Activated T-helper 1 cell treated with anti-CD3 and anti-CD28 coated beads, Interleukin-12 subunit alpha, Interleukin-12 subunit beta, Interleukin-2, Interleukin-4 antibody, amounts not matched to agents 30 ng/mL and 10 ng/mL and 1 ng/mL, durations not matched to agents 14 hours and 24 hours and 36 hours (primary cell): ENCODE measurements at regions of chr13 and their contacts with region 1.

Region 1: GRCh38 chr13:32538621-32539246 is at the start of gene N4BP2L2:
- DNase-seq: peak; percentile 88
- H3K4me3 Mint-ChIP-seq: peak within 1 kb of the TSS; percentile 96
- H3K27ac Mint-ChIP-seq: peak within 1 kb of the TSS; percentile 99
- H3K4me1 Mint-ChIP-seq: peaks cover 46% of the 10 kb centered on the region
- H3K27me3 Mint-ChIP-seq: peaks cover 8% of the 10 kb centered on the region
- total RNA-seq, gene N4BP2L2: 87.1 and 92.8 TPM in 2 replicates

Region 2: GRCh38 chr13:32472194-32472621 is 66.5 kb before region 1 on chr13:
- intact Hi-C with region 1: loop called (anchors 2 kb)
- DNase-seq: no peak
- H3K4me3 Mint-ChIP-seq: no peak overlapping the region
- H3K27ac Mint-ChIP-seq: peak overlapping the region; percentile 82
- H3K4me1 Mint-ChIP-seq: peaks cover 20% of the 10 kb centered on the region
- H3K27me3 Mint-ChIP-seq: no peaks in the 10 kb centered on the region

Region 3: DNA sequence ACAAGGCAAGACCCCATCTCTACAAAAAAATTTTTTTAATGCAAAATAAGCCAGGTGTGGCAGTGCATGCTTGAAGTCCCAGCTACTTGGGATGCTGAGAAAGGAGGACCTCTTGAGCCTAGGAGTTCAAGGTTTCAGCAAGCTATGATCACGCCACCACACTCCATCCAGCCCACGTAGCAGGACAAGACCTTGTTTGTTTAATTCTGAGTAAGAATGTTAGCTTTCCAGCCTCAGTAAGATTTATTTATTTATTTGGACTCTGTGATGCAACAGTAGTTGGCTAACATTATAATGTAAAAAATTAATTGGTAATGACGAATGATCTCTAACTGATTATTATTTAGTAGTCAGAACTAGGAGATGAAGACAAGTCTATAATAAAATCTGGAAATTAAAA is 23.5 kb before region 1 on chr13:
- intact Hi-C with region 1: loop called (anchors 1 kb)
- DNase-seq: no peak
- H3K4me3 Mint-ChIP-seq: no peak overlapping the region
- H3K27ac Mint-ChIP-seq: no peak overlapping the region
- H3K4me1 Mint-ChIP-seq: peaks cover 10% of the 10 kb centered on the region
- H3K27me3 Mint-ChIP-seq: no peaks in the 10 kb centered on the region

Region 4: DNA sequence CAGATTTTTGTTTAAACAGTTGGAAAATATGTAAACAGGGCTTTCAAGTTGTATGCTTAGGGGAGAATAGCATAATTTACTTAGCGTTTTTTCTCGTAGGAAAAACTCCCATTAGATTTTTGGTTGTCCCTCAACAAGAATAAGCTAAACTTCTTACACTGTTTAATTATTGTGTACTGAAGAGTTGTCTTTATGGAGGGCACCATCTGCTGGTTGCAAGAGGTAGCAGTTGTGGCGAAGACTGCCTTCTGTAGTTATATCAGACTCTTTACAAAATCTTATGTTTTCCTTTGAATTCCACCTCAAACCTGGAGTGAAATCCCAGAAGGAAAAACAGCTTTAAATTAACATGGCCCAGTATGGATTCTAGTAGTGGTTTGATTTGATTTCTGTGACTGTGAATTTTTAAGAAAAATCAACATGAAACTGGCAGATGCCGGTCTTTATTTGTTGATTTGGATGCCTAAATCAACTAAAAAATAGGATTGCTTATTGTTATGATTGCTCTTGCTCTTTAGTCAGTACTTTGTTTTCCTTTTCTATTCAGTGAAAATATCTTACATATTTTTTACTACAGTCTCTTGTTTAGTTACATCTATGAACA is 100.9 kb after region 1 on chr13:
- intact Hi-C with region 1: loop called (anchors 2 kb)
- DNase-seq: peak; percentile 25
- H3K4me3 Mint-ChIP-seq: no peak overlapping the region
- H3K27ac Mint-ChIP-seq: no peak overlapping the region
- H3K4me1 Mint-ChIP-seq: peaks cover 34% of the 10 kb centered on the region
- H3K27me3 Mint-ChIP-seq: no peaks in the 10 kb centered on the region

Region 5: DNA sequence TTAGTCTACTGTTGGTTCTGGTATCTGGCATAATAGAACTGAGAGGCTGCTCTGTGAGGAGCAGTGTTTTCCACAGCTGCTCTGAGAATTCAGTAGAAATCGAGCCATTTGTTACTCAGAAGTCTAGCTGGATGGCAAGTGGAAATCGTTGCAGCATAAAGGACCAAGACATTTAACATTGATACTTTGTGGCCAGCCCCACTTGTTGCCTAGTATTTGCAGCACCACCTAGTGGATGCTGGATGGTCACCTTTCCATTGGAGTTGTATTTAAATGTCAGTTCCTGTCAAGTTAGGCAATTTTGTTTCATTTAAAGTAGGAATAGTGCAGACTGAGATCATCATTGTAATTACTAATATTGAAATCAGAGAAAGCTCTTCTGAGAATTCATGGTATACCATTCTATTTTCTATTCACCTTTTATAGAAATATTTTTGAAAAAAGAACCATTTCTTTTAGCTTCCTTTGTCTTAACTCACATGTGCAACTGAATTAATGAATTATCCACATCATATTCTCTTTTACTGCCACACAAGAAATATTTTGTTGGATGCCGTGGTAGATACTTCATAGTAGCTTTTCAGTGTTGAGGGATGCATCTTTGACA is 112.1 kb after region 1 on chr13:
- intact Hi-C with region 1: loop called (anchors 2 kb)
- DNase-seq: peak; percentile 42
- H3K4me3 Mint-ChIP-seq: no peak overlapping the region
- H3K27ac Mint-ChIP-seq: no peak overlapping the region
- H3K4me1 Mint-ChIP-seq: peaks cover 52% of the 10 kb centered on the region
- H3K27me3 Mint-ChIP-seq: no peaks in the 10 kb centered on the region

Region 6: GRCh38 chr13:33817901-33818706 is 1279.4 kb after region 1 on chr13 and contains the start of gene RFC3:
- intact Hi-C with region 1: loop called (anchors 1 kb)
- DNase-seq: peak; percentile 90
- H3K4me3 Mint-ChIP-seq: peak within 1 kb of the TSS; percentile 97
- H3K27ac Mint-ChIP-seq: peak within 1 kb of the TSS; percentile 90
- H3K4me1 Mint-ChIP-seq: peaks cover 46% of the 10 kb centered on the region
- H3K27me3 Mint-ChIP-seq: peaks cover 8% of the 10 kb centered on the region
- total RNA-seq, gene RFC3: 74.7 and 78.0 TPM in 2 replicates